AG04449 (cell line): ENCODE measurements at regions of chr11 and their contacts with region 1.

Region 1: DNA sequence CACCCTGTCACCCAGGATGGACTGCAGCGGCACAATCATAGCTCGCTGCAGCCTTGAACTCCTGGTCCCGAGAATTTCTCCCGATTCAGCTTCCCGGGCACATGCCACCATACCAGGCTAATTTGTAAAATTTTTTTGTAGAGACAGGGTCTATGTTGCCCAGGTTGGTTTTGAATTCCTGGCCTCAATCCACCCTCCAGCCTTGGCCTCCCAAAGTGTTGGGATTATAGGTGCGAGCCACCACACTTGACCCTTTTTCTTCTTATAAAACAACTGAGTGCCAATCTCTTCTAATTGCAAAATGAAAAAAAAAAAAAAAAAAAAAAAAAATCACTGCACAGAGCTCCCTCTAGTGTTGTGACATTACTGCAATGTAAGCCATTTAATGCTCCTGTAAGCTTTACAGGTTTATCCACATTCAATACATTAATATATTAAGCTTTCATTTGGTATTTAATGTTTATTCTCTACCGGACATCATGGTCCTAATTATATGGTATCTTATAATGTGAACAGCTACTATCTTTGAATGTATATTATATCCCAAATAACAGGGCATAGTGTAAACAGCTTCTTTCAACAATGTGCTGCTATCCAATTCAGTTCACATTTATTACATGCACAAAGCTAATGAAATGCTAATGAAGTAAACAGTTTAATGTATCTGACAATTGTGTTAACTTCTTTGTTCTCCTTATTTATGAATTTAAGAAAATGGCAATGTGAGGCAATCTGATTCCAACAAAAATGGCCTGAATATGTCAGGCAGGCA is 44.6 kb downstream of the COPB1 start:
- DNase-seq: no peak
- H3K4me3 ChIP-seq: no peak overlapping the region
- CTCF ChIP-seq: peak; percentile 35

Region 2: GRCh38 chr11:14288189-14288935 is 166.7 kb before region 1 on chr11:
- CTCF ChIA-PET with region 1: interaction called, 44 read pairs
- POLR2A ChIA-PET with region 1: no interaction called
- DNase-seq: peak; percentile 61
- H3K4me3 ChIP-seq: peak overlapping the region; percentile 19; the same call in 1 of the 2 replicates
- CTCF ChIP-seq: no peak

Region 3: DNA sequence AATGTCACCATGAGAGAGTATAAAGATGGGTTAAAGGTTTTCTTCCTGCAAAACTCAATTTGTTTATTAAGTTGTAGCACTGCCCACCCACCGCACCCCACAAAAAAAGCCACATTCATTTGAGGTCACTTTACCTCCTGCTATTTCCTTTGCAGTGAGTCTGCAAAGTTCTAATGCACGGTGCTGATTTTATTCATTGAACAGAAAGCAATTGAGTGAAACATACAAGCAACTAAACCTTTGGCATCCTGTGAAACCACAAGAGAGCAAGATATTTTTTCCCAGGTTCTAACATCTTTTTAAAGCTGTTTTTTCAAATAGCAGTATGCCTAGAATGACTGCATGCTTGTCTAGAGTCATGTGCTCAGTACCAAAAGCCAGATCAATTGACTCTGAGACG is 135.0 kb before region 1 on chr11:
- CTCF ChIA-PET with region 1: interaction called, 10 read pairs
- POLR2A ChIA-PET with region 1: no interaction called
- DNase-seq: no peak
- H3K4me3 ChIP-seq: no peak overlapping the region
- CTCF ChIP-seq: no peak

Region 4: GRCh38 chr11:14384338-14384737 is 70.7 kb before region 1 on chr11:
- CTCF ChIA-PET with region 1: interaction called, 12 read pairs
- POLR2A ChIA-PET with region 1: no interaction called
- DNase-seq: no peak
- H3K4me3 ChIP-seq: no peak overlapping the region
- CTCF ChIP-seq: no peak

Region 5: DNA sequence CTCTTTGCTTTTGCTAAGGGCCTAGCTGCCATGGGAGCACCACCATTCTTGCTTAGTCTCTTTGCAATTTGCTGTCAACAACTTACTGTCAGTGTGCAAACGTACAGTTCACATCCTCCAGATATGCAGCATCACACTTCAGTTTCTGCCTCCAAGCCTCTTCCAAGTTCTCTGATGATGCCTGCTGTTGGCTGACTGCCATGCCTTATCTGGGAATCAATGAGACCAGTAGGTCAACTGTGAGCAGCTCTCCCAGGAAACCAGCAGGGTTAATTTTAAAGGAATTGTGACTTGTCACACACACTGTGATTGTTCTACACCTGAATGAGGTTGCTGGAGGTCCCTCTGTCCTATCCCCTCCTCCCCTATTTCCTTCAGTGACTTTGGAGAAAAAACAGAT is 11.4 kb before region 1 on chr11:
- CTCF ChIA-PET with region 1: interaction called, 24 read pairs
- POLR2A ChIA-PET with region 1: no interaction called
- DNase-seq: no peak
- H3K4me3 ChIP-seq: no peak overlapping the region
- CTCF ChIP-seq: no peak

Region 6: DNA sequence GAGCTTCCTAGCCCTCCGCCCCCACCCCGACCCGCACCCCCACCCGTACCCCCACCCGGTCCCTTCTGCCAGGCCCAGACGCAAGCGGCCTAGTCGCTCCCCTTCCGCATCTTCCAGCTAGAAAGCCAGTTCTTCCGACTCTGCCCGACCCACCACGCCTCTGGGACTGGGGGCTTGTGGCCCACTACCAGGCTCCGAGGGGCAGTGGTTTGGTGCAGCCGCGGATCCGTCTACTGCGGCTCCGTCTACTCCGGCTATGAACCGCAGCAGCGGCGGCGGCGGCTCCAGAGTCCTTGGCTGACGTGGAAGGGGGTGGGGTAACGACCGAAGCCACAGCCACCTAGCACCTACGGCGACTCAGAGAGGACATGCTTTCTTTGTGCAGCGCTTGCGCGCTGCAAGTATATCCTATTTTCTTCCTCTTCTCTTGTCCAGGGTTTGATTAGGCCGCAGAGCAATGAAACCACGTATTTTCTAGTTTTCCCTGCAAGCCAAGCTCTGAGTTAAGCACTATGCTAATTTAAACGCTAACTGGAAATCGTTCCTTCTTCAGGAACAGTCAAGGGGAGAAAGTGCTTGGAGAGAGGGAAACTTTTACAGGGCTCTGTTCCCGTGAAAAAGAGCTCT is 44.6 kb after region 1 on chr11 and contains the start of gene COPB1:
- CTCF ChIA-PET with region 1: interaction called, 14 read pairs
- POLR2A ChIA-PET with region 1: interaction called, 4 read pairs
- DNase-seq: peak; percentile 74
- H3K4me3 ChIP-seq: peak within 1 kb of the TSS; percentile 94
- CTCF ChIP-seq: no peak